A549 (cell line): ENCODE measurements at regions of chr17 and their contacts with region 1.

Region 1: DNA sequence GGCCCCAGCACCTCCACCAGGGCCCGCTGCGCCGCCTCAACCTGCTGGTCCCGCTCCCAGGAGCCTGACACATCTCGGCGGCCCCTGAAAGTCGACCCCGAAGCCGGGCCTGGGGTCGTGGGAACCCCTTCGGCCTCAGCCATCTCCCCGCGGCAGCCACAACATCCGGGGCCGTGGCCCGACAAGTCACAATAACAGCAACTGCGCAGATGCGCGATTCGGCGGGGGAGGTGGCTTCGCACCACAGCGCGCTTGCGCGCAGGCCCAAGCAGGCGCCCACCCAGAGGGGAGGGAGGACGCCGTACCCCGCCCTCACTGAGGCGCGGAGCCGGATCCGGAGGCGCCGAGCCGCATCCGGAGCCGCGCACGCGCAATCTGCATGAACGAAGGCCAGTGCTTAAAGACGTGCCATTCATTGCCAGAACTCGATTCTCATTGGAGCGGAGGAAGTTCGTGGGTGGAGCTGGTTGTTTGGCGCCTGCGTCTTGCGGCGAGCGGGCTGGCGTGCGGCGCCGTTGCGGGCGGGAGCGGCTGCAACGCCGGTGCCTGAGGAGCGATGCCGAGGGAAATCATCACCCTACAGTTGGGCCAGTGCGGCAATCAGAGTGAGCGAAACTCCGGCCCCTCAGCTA is at the starts of genes RETREG3 and TUBG1:
- DNase-seq: peak; percentile 99 to 100
- ATAC-seq: peak; percentile 89 to 94
- H3K4me3 ChIP-seq: peak within 1 kb of the TSS; percentile 90
- H3K27ac ChIP-seq: peak within 1 kb of the TSS; percentile 91 to 92
- H3K4me1 ChIP-seq: peaks cover 22% of the 10 kb centered on the region
- CTCF ChIP-seq: no peak
- EP300 ChIP-seq: no peak
- POLR2A ChIP-seq: peak; percentile 99
- RAD21 ChIP-seq: no peak
- polyA plus RNA-seq, gene RETREG3: 28.3 and 45.9 TPM in 2 replicates
- polyA plus RNA-seq, gene TUBG1: 73.3 and 79.3 TPM in 2 replicates

Region 2: GRCh38 chr17:42598905-42599304 is 10.4 kb before region 1 on chr17:
- CTCF ChIA-PET with region 1: interaction called, 7 read pairs
- POLR2A ChIA-PET with region 1: interaction called, 12 read pairs
- DNase-seq: no peak
- ATAC-seq: no peak
- H3K4me3 ChIP-seq: no peak overlapping the region
- H3K27ac ChIP-seq: no peak overlapping the region
- H3K4me1 ChIP-seq: no peaks in the 10 kb centered on the region
- CTCF ChIP-seq: no peak
- EP300 ChIP-seq: no peak
- POLR2A ChIP-seq: no peak
- RAD21 ChIP-seq: no peak

Region 3: DNA sequence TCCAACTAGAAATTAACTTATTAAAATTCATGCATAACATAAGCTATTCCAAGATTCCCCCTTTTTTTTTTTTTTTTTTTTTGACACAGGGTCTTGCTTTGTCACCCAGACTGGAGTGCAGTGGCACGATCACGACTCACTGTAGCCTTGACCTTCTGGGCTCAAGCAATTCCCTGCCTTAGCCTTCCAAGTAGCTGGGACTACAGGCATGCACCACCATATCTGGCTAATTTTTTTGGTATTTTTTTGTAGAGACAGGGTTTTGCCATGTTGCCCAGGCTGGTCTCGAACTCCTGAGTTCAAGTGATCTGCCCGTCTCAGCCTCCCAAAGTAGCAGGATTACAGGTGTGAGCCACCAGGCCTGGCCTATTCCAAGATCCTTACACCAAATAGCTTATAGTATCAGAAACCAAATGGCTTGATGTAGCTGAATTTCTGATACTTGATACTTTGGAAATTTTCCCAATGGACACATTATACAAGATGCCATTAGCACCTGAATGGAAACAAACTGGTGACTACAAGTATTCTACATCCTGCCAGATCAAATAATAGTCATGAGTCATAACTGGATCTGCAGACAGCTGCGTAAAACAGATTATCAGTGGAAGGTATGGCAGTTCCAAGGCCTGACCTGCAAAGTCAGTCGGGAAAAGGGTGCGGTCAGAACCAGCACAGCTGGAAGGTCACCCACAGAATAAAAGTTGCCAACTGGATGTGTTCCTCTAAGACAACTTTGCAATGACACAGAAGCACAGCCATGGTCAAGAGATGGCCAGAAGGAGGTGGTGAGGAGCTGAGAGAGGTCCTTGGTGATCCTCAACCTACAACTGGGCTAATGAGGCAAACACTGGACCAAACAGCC is 14.7 kb after region 1 on chr17:
- CTCF ChIA-PET with region 1: interaction called, 16 read pairs
- POLR2A ChIA-PET with region 1: interaction called, 6 read pairs
- DNase-seq: peak; percentile 80 to 86
- ATAC-seq: peak; percentile 85 to 90
- H3K4me3 ChIP-seq: no peak overlapping the region
- H3K27ac ChIP-seq: peak overlapping the region; percentile 52 to 70; a peak in 5 of 6 replicates
- H3K4me1 ChIP-seq: peaks cover 15% of the 10 kb centered on the region
- CTCF ChIP-seq: peak; percentile 29; the same call in 2 of the 3 replicates
- EP300 ChIP-seq: no peak
- POLR2A ChIP-seq: no peak
- RAD21 ChIP-seq: peak in 1 of 2 experiments; percentile 12; a peak in 2 of 5 replicates

Region 4: DNA sequence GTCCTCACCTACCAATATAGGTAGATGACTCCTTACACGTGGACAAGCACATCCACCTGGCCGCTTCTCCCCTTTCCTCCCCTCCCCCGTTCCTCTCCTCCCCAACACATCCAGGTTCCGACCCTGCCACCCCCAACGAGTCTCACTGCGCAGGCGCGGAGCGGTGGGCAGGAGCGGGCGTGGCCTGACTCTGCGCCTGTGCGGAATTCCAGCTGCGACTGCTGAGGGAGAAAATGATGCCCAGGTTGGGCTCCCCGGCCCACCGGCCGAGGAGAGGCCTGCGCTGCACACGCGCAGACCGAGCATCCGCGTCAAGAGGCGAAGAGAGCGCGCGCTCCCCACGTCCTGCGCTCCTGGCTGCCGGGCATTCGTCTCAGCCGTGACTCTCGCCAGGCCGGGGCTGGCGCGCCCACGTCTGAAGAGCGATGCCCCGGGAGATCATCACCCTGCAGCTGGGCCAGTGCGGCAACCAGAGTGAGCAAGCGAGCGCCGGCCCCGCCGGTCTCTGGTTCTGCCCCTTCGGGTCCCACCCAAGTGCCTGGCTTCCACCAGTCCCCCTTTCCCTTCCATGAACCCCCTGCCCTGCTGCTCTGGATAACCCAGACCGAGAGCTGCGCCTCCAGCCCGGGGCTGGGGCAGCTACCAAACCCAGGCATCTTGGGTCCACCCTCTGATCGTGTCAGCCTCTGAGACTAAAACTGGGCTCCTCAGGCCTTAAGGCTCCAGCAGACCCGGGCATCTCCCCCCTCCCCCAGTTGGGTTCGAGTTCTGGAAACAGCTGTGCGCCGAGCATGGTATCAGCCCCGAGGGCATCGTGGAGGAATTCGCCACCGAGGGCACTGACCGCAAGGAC is 50.0 kb after region 1 on chr17 and contains the start of gene TUBG2:
- CTCF ChIA-PET with region 1: interaction called, 5 read pairs
- POLR2A ChIA-PET with region 1: interaction called, 12 read pairs
- DNase-seq: peak; percentile 94 to 99
- ATAC-seq: peak; percentile 89 to 95
- H3K4me3 ChIP-seq: peak within 1 kb of the TSS; percentile 67
- H3K27ac ChIP-seq: peak within 1 kb of the TSS; percentile 85 to 94
- H3K4me1 ChIP-seq: peaks cover 18% of the 10 kb centered on the region
- CTCF ChIP-seq: no peak
- EP300 ChIP-seq: no peak
- POLR2A ChIP-seq: peak; percentile 98
- RAD21 ChIP-seq: 0 out of 5 replicates have a peak, but pooled peaks have one; percentile 3 to 21
- polyA plus RNA-seq, gene TUBG2: 14.9 and 18.6 TPM in 2 replicates

Region 5: GRCh38 chr17:42667123-42667951 is 58.0 kb after region 1 on chr17:
- CTCF ChIA-PET with region 1: interaction called, 16 read pairs
- POLR2A ChIA-PET with region 1: interaction called, 13 read pairs
- DNase-seq: peak; percentile 96 to 99
- ATAC-seq: peak; percentile 95 to 96
- H3K4me3 ChIP-seq: 0 out of 3 replicates have a peak overlapping the region, but pooled peaks have one; percentile 7
- H3K27ac ChIP-seq: peak overlapping the region; percentile 78
- H3K4me1 ChIP-seq: peaks cover 32% of the 10 kb centered on the region
- CTCF ChIP-seq: no peak
- EP300 ChIP-seq: no peak
- POLR2A ChIP-seq: no peak
- RAD21 ChIP-seq: peak in 1 of 2 experiments; percentile 8; a peak in 1 of 5 replicates